Mammary epithelial cell (primary cell): ENCODE measurements at regions of chr13 and their contacts with region 1.

Region 1: GRCh38 chr13:72255908-72256307 is 388.9 kb upstream of the DACH1 start:
- DNase-seq: peak; percentile 64
- H3K4me3 ChIP-seq: no peak overlapping the region
- H3K27ac ChIP-seq: no peak overlapping the region
- H3K4me1 ChIP-seq: no peaks in the 10 kb centered on the region
- H3K27me3 ChIP-seq: no peaks in the 10 kb centered on the region
- CTCF ChIP-seq: peak; percentile 78 to 87

Region 2: GRCh38 chr13:71240911-71241310 is 1015.0 kb before region 1 on chr13:
- CTCF ChIA-PET with region 1: no interaction called
- dilution Hi-C with region 1: no loop called
- in situ Hi-C with region 1: no loop called
- intact Hi-C with region 1: loop called (anchors 10 kb)
- DNase-seq: no peak
- H3K4me3 ChIP-seq: no peak overlapping the region
- H3K27ac ChIP-seq: no peak overlapping the region
- H3K4me1 ChIP-seq: no peaks in the 10 kb centered on the region
- H3K27me3 ChIP-seq: no peaks in the 10 kb centered on the region
- CTCF ChIP-seq: peak; percentile 15 to 63

Region 3: DNA sequence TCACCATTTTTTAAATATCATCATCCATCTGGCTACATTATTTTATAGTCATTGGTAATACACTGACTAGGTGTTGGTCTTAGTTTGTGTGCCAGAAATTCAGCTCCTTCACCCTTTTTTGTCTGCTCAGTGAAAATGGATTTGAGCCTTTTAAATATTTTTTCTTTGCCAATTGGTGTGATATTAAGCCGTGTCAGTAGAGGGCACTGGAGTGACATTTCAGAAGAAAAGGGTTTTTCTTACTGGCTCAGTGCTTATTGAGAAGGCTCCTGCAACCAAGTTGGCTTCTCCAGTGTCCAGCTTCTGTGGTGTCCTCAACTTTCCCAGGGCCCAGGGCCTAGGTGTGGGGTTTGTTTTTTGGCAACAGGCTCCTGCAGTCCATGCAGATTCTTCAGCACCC is 935.5 kb before region 1 on chr13:
- CTCF ChIA-PET with region 1: no interaction called
- dilution Hi-C with region 1: no loop called
- in situ Hi-C with region 1: no loop called
- intact Hi-C with region 1: loop called (anchors 10 kb)
- DNase-seq: peak; percentile 7
- H3K4me3 ChIP-seq: no peak overlapping the region
- H3K27ac ChIP-seq: no peak overlapping the region
- H3K4me1 ChIP-seq: no peaks in the 10 kb centered on the region
- H3K27me3 ChIP-seq: peaks cover 3% of the 10 kb centered on the region
- CTCF ChIP-seq: peak; percentile 64 to 66

Region 4: DNA sequence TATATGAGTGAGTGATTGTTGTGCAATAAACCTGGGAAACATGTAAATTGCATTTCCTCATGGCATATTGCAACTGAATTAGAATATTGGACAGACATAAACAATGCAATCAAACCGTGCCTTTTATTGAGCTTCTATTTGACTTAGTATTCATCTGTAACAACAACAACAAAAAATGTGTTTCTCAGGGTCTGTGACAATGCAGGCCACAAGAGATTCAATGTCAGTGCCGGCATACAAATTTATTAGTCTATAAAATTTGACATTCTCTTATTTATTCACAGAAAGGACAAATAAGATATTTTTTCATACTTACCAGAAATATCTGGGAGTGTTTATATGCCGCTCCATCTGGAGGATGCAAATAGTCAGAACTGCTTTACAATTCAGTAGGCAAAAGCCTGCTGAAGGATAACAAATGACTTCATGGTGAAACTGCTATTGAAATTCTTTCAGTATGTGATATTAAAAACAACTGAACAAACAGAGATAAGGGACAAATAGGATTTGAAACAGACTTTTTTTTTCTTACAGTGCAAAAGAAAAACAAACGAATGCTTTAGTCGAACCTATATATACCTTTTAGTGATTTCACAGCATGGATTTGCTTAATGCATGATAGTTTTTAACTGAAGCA is 466.1 kb before region 1 on chr13:
- CTCF ChIA-PET with region 1: no interaction called
- dilution Hi-C with region 1: no loop called
- in situ Hi-C with region 1: no loop called
- intact Hi-C with region 1: no loop called
- DNase-seq: no peak
- H3K4me3 ChIP-seq: no peak overlapping the region
- H3K27ac ChIP-seq: no peak overlapping the region
- H3K4me1 ChIP-seq: no peaks in the 10 kb centered on the region
- H3K27me3 ChIP-seq: peaks cover 5% of the 10 kb centered on the region
- CTCF ChIP-seq: no peak

Region 5: GRCh38 chr13:71879129-71879535 is 376.8 kb before region 1 on chr13:
- CTCF ChIA-PET with region 1: no interaction called
- dilution Hi-C with region 1: no loop called
- in situ Hi-C with region 1: no loop called
- intact Hi-C with region 1: loop called (anchors 10 kb)
- DNase-seq: peak; percentile 37
- H3K4me3 ChIP-seq: peak overlapping the region in 1 of 3 experiments; percentile 15
- H3K27ac ChIP-seq: no peak overlapping the region
- H3K4me1 ChIP-seq: peaks cover 4% of the 10 kb centered on the region
- H3K27me3 ChIP-seq: no peaks in the 10 kb centered on the region
- CTCF ChIP-seq: peak; percentile 36 to 58

Region 6: DNA sequence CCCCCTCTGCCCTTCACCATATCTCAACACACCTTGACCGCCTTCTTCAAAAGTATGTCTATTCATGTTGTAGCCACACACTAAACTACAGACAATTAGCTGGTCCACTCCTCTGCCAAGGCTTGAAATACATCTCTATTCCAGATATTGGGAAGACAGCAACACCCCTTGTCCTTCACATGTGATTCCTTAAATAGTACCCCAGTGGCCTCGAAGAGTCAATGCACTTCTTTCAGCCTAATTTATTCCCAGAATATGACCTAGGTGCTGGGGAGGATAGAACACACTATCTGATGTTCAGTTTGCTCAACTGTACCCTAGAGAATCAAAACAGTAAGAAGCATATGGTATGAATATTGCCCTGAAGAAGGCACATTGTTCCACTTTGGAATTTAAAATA is 306.5 kb before region 1 on chr13:
- CTCF ChIA-PET with region 1: no interaction called
- dilution Hi-C with region 1: no loop called
- in situ Hi-C with region 1: no loop called
- intact Hi-C with region 1: no loop called
- DNase-seq: no peak
- H3K4me3 ChIP-seq: no peak overlapping the region
- H3K27ac ChIP-seq: no peak overlapping the region
- H3K4me1 ChIP-seq: no peaks in the 10 kb centered on the region
- H3K27me3 ChIP-seq: no peaks in the 10 kb centered on the region
- CTCF ChIP-seq: no peak

Region 7: GRCh38 chr13:71979616-71980015 is 276.3 kb before region 1 on chr13:
- CTCF ChIA-PET with region 1: no interaction called
- dilution Hi-C with region 1: no loop called
- in situ Hi-C with region 1: no loop called
- intact Hi-C with region 1: loop called (anchors 5 kb)
- DNase-seq: peak; percentile 12
- H3K4me3 ChIP-seq: no peak overlapping the region
- H3K27ac ChIP-seq: no peak overlapping the region
- H3K4me1 ChIP-seq: no peaks in the 10 kb centered on the region
- H3K27me3 ChIP-seq: no peaks in the 10 kb centered on the region
- CTCF ChIP-seq: peak; percentile 40 to 72

Region 8: GRCh38 chr13:72166102-72166652 is 89.7 kb before region 1 on chr13:
- CTCF ChIA-PET with region 1: no interaction called
- dilution Hi-C with region 1: no loop called
- in situ Hi-C with region 1: no loop called
- intact Hi-C with region 1: no loop called
- DNase-seq: peak; percentile 52
- H3K4me3 ChIP-seq: no peak overlapping the region
- H3K27ac ChIP-seq: no peak overlapping the region
- H3K4me1 ChIP-seq: peaks cover 13% of the 10 kb centered on the region
- H3K27me3 ChIP-seq: no peaks in the 10 kb centered on the region
- CTCF ChIP-seq: no peak

Region 9: GRCh38 chr13:72565893-72566292 is 310.0 kb after region 1 on chr13:
- CTCF ChIA-PET with region 1: no interaction called
- dilution Hi-C with region 1: no loop called
- in situ Hi-C with region 1: no loop called
- intact Hi-C with region 1: loop called (anchors 5 kb)
- DNase-seq: no peak
- H3K4me3 ChIP-seq: no peak overlapping the region
- H3K27ac ChIP-seq: no peak overlapping the region
- H3K4me1 ChIP-seq: no peaks in the 10 kb centered on the region
- H3K27me3 ChIP-seq: no peaks in the 10 kb centered on the region
- CTCF ChIP-seq: peak; percentile 77 to 79

Region 10: GRCh38 chr13:72696579-72696978 is 440.7 kb after region 1 on chr13:
- CTCF ChIA-PET with region 1: no interaction called
- dilution Hi-C with region 1: no loop called
- in situ Hi-C with region 1: no loop called
- intact Hi-C with region 1: loop called (anchors 5 kb)
- DNase-seq: no peak
- H3K4me3 ChIP-seq: no peak overlapping the region
- H3K27ac ChIP-seq: no peak overlapping the region
- H3K4me1 ChIP-seq: no peaks in the 10 kb centered on the region
- H3K27me3 ChIP-seq: no peaks in the 10 kb centered on the region
- CTCF ChIP-seq: peak; percentile 28 to 38